OCI-LY7 (cell line): ENCODE measurements at regions of chr16 and their contacts with region 1.

Region 1: GRCh38 chr16:67872786-67873537 is at the start of gene EDC4:
- DNase-seq: peak; percentile 87
- H3K4me3 ChIP-seq: peak within 1 kb of the TSS; percentile 95
- H3K27ac ChIP-seq: peak within 1 kb of the TSS; percentile 48
- H3K4me1 ChIP-seq: peaks cover 23% of the 10 kb centered on the region
- CTCF ChIP-seq: no peak
- total RNA-seq, gene EDC4: 58.4 and 89.6 TPM in 2 replicates

Region 2: GRCh38 chr16:67841764-67842508 is 31.0 kb before region 1 on chr16 and contains the start of gene THAP11:
- CTCF ChIA-PET with region 1: interaction called, 3 read pairs
- POLR2A ChIA-PET with region 1: interaction called, 3 read pairs
- intact Hi-C with region 1: loop called (anchors 1 kb)
- DNase-seq: peak; percentile 97
- H3K4me3 ChIP-seq: peak within 1 kb of the TSS; percentile 99
- H3K27ac ChIP-seq: peak within 1 kb of the TSS; percentile 78
- H3K4me1 ChIP-seq: peaks cover 37% of the 10 kb centered on the region
- CTCF ChIP-seq: peak; percentile 75
- total RNA-seq, gene THAP11: 52.9 and 66.3 TPM in 2 replicates